ENCODE measurements at regions of chr11 and their contacts with region 1.

Region 1: DNA sequence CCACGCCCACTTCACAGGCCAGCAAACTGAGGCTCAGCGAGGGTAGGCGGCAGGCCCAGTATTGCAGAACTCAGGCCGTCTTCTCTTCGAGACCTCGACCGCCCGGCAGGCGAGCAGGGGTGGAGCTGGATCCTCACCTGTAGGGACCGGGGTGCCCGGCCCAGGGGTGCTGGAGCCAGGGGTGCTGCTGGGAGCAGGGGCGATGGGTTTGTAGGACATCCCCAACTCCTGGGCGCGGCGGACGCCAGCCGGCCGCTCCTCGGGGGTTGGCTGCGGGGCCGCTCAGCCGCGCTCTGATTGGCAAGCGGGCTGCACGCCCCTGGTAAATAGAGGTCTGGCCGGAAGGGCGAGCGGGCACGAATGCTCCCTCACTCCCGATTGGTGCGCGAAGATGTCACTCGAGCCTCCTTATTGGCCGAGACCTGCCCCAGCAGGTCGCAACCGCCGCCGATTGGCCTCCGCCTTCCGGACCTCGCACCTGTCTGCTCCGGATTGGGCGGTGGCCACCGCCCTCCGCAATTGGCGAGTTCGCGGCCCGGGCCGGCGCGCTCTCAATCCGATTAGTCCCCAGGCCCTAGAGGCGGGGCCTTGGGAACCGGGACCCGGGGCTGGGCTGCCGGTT is at the start of gene CDK2AP2:
- DNase-seq: peak; percentile 99
- H3K4me3 ChIP-seq: peak within 1 kb of the TSS; percentile 72 to 93 (median 81)
- H3K27ac ChIP-seq: peak within 1 kb of the TSS; percentile 97 to 100 (median 98)
- H3K4me1 ChIP-seq: peaks cover 27 to 58% (median 54%) of the 10 kb centered on the region in 4 donors
- H3K27me3 ChIP-seq: peaks cover 0 to 38% (median 3%) of the 10 kb centered on the region in 4 donors
- CTCF ChIP-seq: peak in 1 of 3 experiments; percentile 7
- EP300 ChIP-seq: no peak
- POLR2A ChIP-seq: peak; percentile 83
- total RNA-seq, gene CDK2AP2: 61.0 to 111 (median 67.8) TPM

Region 2: GRCh38 chr11:67060111-67060522 is 447.9 kb before region 1 on chr11:
- intact Hi-C with region 1: no loop called
- DNase-seq: no peak
- H3K4me3 ChIP-seq: no peak overlapping the region
- H3K27ac ChIP-seq: no peak overlapping the region
- H3K4me1 ChIP-seq: peaks cover 23 to 28% (median 27%) of the 10 kb centered on the region in 4 donors
- H3K27me3 ChIP-seq: no peaks in the 10 kb centered on the region
- CTCF ChIP-seq: no peak
- EP300 ChIP-seq: no peak
- POLR2A ChIP-seq: no peak

Region 3: GRCh38 chr11:67353317-67354074 is 154.5 kb before region 1 on chr11 and contains the start of gene POLD4:
- intact Hi-C with region 1: loop called (anchors 10 kb)
- DNase-seq: peak; percentile 99
- H3K4me3 ChIP-seq: peak within 1 kb of the TSS; percentile 72 to 84 (median 78)
- H3K27ac ChIP-seq: peak within 1 kb of the TSS; percentile 96 to 99 (median 98)
- H3K4me1 ChIP-seq: peaks cover 61 to 80% (median 75%) of the 10 kb centered on the region in 4 donors
- H3K27me3 ChIP-seq: no peaks in the 10 kb centered on the region
- CTCF ChIP-seq: no peak
- EP300 ChIP-seq: no peak
- POLR2A ChIP-seq: peak; percentile 78
- total RNA-seq, gene POLD4: 77.2 to 106 (median 83.1) TPM

Region 4: DNA sequence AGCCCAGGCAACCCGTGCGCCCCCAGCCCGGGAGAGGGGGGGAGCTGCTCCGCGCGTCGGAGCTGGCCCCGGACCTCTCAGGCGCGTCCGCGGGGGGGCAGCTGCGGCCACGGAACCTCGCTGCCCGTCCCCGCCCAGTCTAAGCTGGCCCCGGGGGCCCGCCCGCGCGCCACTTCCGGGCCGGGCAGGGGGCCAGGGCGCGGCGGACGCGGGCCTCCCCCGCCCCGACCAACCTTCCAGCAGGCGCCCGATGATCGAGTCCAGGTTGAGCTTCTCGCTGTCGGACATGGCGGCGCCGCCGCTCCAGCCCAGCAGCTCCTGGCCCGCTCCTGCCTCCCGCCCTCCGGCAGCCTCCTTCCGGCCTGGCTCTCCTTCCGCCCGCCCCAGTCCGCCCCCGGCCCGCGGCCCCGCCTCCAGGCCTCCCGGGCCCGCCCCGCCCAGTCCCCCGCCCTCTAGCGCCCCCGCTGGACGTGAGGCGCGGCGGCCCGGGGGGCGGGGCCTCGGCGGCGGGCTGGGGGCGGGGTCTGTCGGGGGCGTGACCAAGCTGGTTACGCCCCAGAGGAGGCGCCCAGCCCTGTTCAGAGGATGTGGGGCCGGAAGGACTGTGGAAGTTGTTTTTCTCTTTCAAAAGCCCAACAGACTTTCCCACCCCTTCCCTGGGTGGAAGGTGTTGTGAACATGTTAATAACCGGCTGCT is 106.3 kb before region 1 on chr11 and contains the start of gene PPP1CA:
- intact Hi-C with region 1: loop called (anchors 5 kb)
- DNase-seq: peak; percentile 97
- H3K4me3 ChIP-seq: peak within 1 kb of the TSS; percentile 80 to 92 (median 88)
- H3K27ac ChIP-seq: peak within 1 kb of the TSS; percentile 93 to 98 (median 94)
- H3K4me1 ChIP-seq: peaks cover 23 to 52% (median 43%) of the 10 kb centered on the region in 4 donors
- H3K27me3 ChIP-seq: peaks cover 0 to 37% (median 0%) of the 10 kb centered on the region in 4 donors
- CTCF ChIP-seq: peak; percentile 29 to 74 (median 37)
- EP300 ChIP-seq: no peak
- POLR2A ChIP-seq: no peak
- total RNA-seq, gene PPP1CA: 56.9 to 87.3 (median 78.7) TPM

Region 5: DNA sequence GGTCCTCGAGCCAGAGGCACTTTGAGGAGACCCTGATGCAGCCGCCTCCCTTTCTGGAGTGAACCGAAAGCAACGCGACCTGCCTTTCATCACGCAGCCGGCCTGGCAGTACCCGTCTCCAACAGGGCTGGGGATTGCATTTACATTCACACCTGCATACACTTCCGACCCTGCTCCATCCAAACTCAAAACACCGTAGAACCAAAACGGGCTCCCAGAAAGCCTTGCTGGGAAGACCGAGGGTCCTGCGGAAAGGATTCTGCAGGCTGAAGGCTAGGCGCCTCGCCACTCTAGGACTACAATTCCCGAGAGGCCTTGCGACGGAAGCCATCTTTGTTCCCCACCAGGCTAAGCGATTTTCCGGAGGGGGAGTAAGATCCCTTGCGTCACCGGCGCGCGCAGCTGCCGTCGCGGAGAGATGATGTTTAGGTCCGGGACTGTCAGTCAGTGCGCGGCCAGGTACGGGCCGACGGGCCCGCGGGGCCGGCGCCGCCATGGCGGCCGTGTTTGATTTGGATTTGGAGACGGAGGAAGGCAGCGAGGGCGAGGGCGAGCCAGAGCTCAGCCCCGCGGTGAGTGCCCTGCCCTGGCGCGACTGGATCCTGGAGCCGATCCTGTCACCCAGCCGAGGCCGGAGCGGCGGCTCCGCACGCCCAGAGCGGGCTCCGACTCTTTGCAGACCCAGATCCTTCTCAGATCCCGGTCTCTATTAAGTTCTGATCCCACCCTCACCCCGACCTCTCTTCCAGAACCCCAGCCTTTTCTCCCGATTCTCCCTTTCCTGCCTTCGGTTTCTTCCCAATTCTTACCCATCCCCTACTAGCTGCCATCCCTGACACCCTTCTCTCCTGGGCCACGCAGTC is 79.7 kb before region 1 on chr11 and contains the start of gene RPS6KB2:
- intact Hi-C with region 1: no loop called
- DNase-seq: peak; percentile 99
- H3K4me3 ChIP-seq: peak within 1 kb of the TSS; percentile 69 to 98 (median 80)
- H3K27ac ChIP-seq: peak within 1 kb of the TSS; percentile 86 to 96 (median 94)
- H3K4me1 ChIP-seq: peaks cover 21 to 31% (median 26%) of the 10 kb centered on the region in 4 donors
- H3K27me3 ChIP-seq: no peaks in the 10 kb centered on the region
- CTCF ChIP-seq: peak in 1 of 3 experiments; percentile 29
- EP300 ChIP-seq: no peak
- POLR2A ChIP-seq: peak; percentile 86
- total RNA-seq, gene RPS6KB2: 34.0 to 51.0 (median 48.0) TPM